ENCODE measurements at regions of chr7 and their contacts with region 1.

Region 1: DNA sequence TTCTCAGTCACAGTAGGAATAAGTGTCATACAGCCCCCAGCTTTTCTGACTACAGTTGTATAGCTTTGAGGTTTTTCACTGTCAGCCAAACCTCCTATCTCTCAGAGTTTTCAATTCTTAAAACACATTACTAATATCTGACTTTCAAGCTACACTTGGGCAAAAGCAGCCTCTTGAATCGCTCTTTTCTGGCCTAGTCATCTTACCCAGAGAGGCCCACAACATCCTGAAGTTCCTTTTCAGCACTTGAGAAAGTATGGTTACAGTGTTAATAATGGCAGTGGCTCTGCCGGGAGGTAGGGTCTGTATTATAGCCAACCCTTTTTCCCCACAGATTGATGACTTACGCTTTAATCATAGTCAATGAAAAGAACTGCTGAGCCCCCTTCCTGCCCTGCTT is 181.0 kb downstream of the LRRC4 start:
- DNase-seq: peak; percentile 68
- H3K4me3 Mint-ChIP-seq: no peak overlapping the region
- H3K27ac Mint-ChIP-seq: peak overlapping the region; percentile 84
- H3K4me1 Mint-ChIP-seq: peaks cover 39% of the 10 kb centered on the region
- H3K27me3 Mint-ChIP-seq: no peaks in the 10 kb centered on the region

Region 2: DNA sequence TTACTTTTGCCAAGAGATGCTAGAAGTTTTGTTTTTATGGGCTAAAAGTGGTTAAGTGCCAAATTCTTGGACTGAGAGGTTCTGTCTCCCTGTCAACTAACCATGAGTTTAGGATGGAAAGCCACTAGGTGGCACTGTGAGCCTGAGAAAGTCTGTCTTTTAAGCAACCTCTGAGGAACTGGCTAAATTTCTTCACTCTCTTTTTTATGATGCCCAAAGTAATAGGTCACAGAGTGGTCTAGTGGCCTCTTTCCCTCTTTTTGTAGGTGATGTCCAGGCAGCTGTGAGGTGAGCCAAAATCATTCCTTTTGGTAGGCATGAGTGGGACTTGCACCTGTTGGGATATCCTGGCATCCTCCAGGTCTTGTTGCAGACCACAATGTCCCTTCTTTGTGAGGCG is 141.4 kb before region 1 on chr7:
- CTCF ChIA-PET with region 1: no interaction called
- intact Hi-C with region 1: loop called (anchors 5 kb)
- DNase-seq: peak; percentile 89
- H3K4me3 Mint-ChIP-seq: no peak overlapping the region
- H3K27ac Mint-ChIP-seq: no peak overlapping the region
- H3K4me1 Mint-ChIP-seq: peaks cover 9% of the 10 kb centered on the region
- H3K27me3 Mint-ChIP-seq: no peaks in the 10 kb centered on the region

Region 3: GRCh38 chr7:127745445-127745844 is 104.8 kb before region 1 on chr7:
- CTCF ChIA-PET with region 1: no interaction called
- intact Hi-C with region 1: loop called (anchors 1 kb)
- DNase-seq: peak; percentile 27
- H3K4me3 Mint-ChIP-seq: no peak overlapping the region
- H3K27ac Mint-ChIP-seq: peak overlapping the region; percentile 19
- H3K4me1 Mint-ChIP-seq: peaks cover 51% of the 10 kb centered on the region
- H3K27me3 Mint-ChIP-seq: no peaks in the 10 kb centered on the region

Region 4: GRCh38 chr7:127819975-127820731 is 30.0 kb before region 1 on chr7:
- CTCF ChIA-PET with region 1: no interaction called
- intact Hi-C with region 1: loop called (anchors 1 kb)
- DNase-seq: no peak
- H3K4me3 Mint-ChIP-seq: no peak overlapping the region
- H3K27ac Mint-ChIP-seq: peak overlapping the region; percentile 10
- H3K4me1 Mint-ChIP-seq: peaks cover 26% of the 10 kb centered on the region
- H3K27me3 Mint-ChIP-seq: no peaks in the 10 kb centered on the region

Region 5: GRCh38 chr7:127865466-127865865 is 15.3 kb after region 1 on chr7:
- CTCF ChIA-PET with region 1: no interaction called
- intact Hi-C with region 1: no loop called
- DNase-seq: no peak
- H3K4me3 Mint-ChIP-seq: no peak overlapping the region
- H3K27ac Mint-ChIP-seq: no peak overlapping the region
- H3K4me1 Mint-ChIP-seq: peaks cover 4% of the 10 kb centered on the region
- H3K27me3 Mint-ChIP-seq: no peaks in the 10 kb centered on the region

Region 6: DNA sequence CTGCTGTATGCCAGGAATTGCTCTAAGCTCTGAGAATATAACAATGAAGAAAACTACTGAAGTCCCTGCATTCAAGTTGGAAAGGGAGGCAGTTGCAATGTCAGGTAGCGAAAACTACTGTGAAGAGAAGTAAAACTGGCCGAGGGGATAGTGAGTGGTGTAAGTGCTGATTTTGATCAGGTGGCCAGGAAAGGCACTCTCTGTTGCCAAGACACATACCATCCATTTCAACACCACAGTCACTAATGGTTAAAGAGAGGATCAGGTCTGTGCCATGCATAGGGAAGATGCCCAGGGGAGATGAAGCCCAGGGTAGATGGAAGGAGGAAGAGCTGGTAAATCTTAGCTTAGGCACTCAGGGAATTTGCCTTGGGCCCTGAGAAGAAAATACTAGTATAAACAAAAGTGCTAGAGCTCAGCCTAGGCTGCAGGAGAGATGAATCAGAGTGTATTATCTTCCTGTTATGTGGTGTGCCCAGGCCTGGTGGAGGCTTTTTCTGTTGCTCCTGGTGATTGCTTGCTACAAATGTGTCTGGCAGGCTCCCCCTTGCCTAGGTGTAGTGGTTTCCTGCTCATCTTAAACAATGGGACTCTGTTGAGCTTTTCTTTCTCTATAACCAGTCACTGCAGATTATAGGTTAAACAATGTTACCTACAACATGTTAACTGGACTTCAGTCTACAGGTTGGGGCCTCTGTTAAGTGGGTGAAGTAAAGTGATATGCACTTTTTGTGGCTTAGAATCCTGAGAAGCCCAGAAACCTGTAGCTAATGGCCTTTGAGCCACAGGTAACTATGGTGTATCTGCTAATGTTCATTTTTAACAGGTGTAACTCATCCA is 55.5 kb after region 1 on chr7:
- CTCF ChIA-PET with region 1: no interaction called
- intact Hi-C with region 1: no loop called
- DNase-seq: peak; percentile 54
- H3K4me3 Mint-ChIP-seq: no peak overlapping the region
- H3K27ac Mint-ChIP-seq: no peak overlapping the region
- H3K4me1 Mint-ChIP-seq: peaks cover 55% of the 10 kb centered on the region
- H3K27me3 Mint-ChIP-seq: no peaks in the 10 kb centered on the region